ENCODE measurements at regions of chr21 and their contacts with region 1.

Region 1: DNA sequence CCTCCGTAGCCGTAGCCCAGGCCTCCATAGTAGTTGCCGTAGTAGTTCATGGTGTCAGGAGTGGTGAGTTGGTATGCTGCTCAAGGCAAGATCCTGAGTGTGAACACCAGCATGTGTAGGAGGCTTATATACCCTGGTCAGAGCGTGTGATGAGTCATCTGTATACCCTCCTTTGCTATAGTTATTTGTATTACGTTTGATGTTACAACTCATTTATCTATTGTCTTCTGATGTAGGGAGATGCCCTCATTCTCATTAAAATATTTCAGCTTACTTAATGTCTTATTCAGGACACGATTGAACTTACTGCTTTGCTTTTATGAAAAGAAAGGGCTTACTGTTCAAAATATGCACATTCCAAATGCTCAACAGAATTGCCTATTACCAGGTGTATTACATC is at the start of gene KRTAP19-5:
- DNase-seq: no peak
- H3K4me3 ChIP-seq: no peak within 1 kb of the TSS
- H3K27ac ChIP-seq: no peak within 1 kb of the TSS
- H3K4me1 ChIP-seq: no peaks in the 10 kb centered on the region
- H3K27me3 ChIP-seq: no peaks in the 10 kb centered on the region
- CTCF ChIP-seq: no peak
- EP300 ChIP-seq: no peak
- POLR2A ChIP-seq: no peak
- RAD21 ChIP-seq: no peak
- total RNA-seq, gene KRTAP19-5: not detected in 2 replicates

Region 2: GRCh38 chr21:30515681-30516080 is 13.6 kb after region 1 on chr21:
- CTCF ChIA-PET with region 1: interaction called, 15 read pairs
- POLR2A ChIA-PET with region 1: no interaction called
- DNase-seq: no peak
- H3K4me3 ChIP-seq: no peak overlapping the region
- H3K27ac ChIP-seq: no peak overlapping the region
- H3K4me1 ChIP-seq: no peaks in the 10 kb centered on the region
- H3K27me3 ChIP-seq: no peaks in the 10 kb centered on the region
- CTCF ChIP-seq: no peak
- EP300 ChIP-seq: no peak
- POLR2A ChIP-seq: no peak
- RAD21 ChIP-seq: no peak

Region 3: DNA sequence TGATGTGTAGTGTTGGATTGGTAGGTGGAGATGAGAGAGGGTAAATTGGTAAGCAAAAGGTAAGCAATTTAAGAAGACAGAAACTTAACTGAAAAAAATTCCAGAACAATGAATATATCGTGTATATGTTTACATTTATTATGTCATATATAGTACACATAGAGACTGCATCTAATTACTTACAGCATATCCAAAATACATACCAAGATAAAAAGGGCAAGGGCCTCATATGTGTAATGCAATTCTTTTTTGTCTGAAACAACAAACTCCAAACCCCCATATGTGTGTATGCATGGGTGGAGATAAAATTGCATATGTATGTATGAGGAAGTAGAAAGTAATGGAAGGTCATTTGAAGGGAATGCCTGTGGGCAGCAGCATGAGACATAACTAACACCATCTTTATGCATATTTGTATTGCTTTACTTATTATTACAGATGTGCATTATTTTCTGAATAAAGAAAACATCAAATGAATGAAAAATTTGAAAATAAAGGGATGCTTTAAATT is 144.9 kb after region 1 on chr21:
- CTCF ChIA-PET with region 1: no interaction called
- POLR2A ChIA-PET with region 1: no interaction called
- DNase-seq: no peak
- H3K4me3 ChIP-seq: no peak overlapping the region
- H3K27ac ChIP-seq: no peak overlapping the region
- H3K4me1 ChIP-seq: no peaks in the 10 kb centered on the region
- H3K27me3 ChIP-seq: no peaks in the 10 kb centered on the region
- CTCF ChIP-seq: no peak
- EP300 ChIP-seq: no peak
- POLR2A ChIP-seq: no peak
- RAD21 ChIP-seq: no peak

Region 4: GRCh38 chr21:30839304-30839703 is 337.3 kb after region 1 on chr21:
- CTCF ChIA-PET with region 1: interaction called, 10 read pairs
- POLR2A ChIA-PET with region 1: no interaction called
- DNase-seq: peak; percentile 29 to 63
- H3K4me3 ChIP-seq: no peak overlapping the region
- H3K27ac ChIP-seq: no peak overlapping the region
- H3K4me1 ChIP-seq: no peaks in the 10 kb centered on the region
- H3K27me3 ChIP-seq: no peaks in the 10 kb centered on the region
- CTCF ChIP-seq: peak; percentile 73 to 79 (median 77)
- EP300 ChIP-seq: no peak
- POLR2A ChIP-seq: no peak
- RAD21 ChIP-seq: peak; percentile 66 to 72